ENCODE measurements at regions of chr15 and their contacts with region 1.

Region 1: DNA sequence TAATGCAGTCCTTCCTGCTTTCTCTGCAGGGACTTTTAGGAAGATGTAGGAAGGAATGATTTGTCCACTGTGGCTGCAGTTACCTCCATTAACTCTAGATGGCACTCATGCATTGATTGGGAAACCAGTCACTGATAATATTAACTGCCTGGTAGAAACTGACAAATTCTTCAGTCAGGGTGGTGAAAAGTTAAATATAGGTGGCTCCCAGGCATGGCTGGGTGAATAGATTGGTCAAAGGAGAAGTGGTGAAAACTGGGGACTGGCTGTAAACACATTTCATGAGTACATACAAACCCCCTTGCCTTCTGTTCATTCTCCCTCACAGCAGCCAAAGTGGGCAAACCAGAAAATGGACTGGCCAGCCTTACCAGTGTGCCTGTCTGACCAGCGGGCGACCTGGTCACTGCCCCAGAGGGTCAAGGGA is 333.4 kb downstream of the THSD4 start:
- DNase-seq: peak; percentile 73
- H3K4me3 ChIP-seq: no peak overlapping the region
- H3K27ac ChIP-seq: peak overlapping the region; percentile 99
- H3K4me1 ChIP-seq: peaks cover 49% of the 10 kb centered on the region
- H3K27me3 ChIP-seq: no peaks in the 10 kb centered on the region
- CTCF ChIP-seq: peak; percentile 93 to 98

Region 2: DNA sequence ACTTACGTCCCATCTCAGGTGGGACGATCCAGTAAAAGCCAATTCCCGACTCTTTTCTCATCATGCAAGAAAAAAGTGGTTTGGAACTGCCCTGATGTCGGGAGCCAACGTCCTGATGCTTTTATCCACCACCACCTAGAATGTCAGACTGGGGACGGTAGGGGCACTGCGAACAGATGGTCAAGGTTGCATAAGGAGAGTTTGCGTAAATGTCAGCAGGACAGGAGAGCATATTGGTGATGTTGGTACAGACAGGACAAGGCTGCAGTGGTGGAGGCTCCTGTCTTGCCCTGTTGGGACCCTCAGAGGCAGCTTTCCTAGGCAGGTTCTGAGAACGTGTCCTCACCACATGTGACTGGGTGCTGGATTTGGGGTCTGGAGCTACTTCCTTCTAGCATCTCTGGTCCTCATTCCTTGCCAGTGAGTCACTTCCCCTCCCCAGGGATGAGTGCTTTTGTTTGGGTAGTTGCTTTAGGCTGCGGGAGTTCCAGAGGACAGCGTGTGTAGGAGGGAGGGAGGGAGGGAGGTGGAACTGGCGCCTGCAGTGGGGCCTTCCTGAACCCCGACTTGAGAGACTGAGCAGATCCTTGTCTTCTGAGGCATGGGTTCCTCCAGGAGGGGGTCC is 312.4 kb before region 1 on chr15:
- CTCF ChIA-PET with region 1: interaction called, 4 read pairs
- dilution Hi-C with region 1: loop called (anchors 25 kb)
- in situ Hi-C with region 1: no loop called
- intact Hi-C with region 1: no loop called
- DNase-seq: peak; percentile 85
- H3K4me3 ChIP-seq: no peak overlapping the region
- H3K27ac ChIP-seq: peak overlapping the region; percentile 87
- H3K4me1 ChIP-seq: peaks cover 54% of the 10 kb centered on the region
- H3K27me3 ChIP-seq: no peaks in the 10 kb centered on the region
- CTCF ChIP-seq: no peak

Region 3: DNA sequence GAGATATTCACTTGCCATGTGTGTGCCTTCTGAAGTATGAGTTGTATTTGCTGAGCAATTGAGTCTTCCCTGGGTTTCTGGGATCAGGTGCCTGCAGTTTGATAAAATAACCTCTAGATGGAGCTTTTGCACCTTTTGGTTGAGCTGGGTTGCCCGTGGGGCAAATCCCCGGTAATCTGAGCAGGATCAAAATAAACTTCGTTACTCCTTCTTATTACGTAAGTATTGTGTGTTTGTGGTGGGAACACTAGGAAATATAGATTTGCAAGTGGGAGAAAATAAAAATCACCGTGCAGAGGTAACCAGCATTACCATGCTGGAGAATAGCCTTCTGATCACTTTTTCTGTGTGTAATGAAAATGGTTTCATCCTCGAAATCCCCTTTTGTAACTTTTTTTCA is 84.3 kb after region 1 on chr15:
- CTCF ChIA-PET with region 1: interaction called, 3 read pairs
- dilution Hi-C with region 1: no loop called
- in situ Hi-C with region 1: no loop called
- intact Hi-C with region 1: loop called (anchors 1 kb)
- DNase-seq: peak; percentile 63
- H3K4me3 ChIP-seq: no peak overlapping the region
- H3K27ac ChIP-seq: no peak overlapping the region
- H3K4me1 ChIP-seq: peaks cover 8% of the 10 kb centered on the region
- H3K27me3 ChIP-seq: no peaks in the 10 kb centered on the region
- CTCF ChIP-seq: peak; percentile 74 to 81

Region 4: GRCh38 chr15:71575474-71576045 is 126.9 kb after region 1 on chr15:
- CTCF ChIA-PET with region 1: interaction called, 5 read pairs
- dilution Hi-C with region 1: no loop called
- in situ Hi-C with region 1: no loop called
- intact Hi-C with region 1: loop called (anchors 5 kb)
- DNase-seq: no peak
- H3K4me3 ChIP-seq: no peak overlapping the region
- H3K27ac ChIP-seq: no peak overlapping the region
- H3K4me1 ChIP-seq: peaks cover 18% of the 10 kb centered on the region
- H3K27me3 ChIP-seq: no peaks in the 10 kb centered on the region
- CTCF ChIP-seq: peak; percentile 59 to 66

Region 5: DNA sequence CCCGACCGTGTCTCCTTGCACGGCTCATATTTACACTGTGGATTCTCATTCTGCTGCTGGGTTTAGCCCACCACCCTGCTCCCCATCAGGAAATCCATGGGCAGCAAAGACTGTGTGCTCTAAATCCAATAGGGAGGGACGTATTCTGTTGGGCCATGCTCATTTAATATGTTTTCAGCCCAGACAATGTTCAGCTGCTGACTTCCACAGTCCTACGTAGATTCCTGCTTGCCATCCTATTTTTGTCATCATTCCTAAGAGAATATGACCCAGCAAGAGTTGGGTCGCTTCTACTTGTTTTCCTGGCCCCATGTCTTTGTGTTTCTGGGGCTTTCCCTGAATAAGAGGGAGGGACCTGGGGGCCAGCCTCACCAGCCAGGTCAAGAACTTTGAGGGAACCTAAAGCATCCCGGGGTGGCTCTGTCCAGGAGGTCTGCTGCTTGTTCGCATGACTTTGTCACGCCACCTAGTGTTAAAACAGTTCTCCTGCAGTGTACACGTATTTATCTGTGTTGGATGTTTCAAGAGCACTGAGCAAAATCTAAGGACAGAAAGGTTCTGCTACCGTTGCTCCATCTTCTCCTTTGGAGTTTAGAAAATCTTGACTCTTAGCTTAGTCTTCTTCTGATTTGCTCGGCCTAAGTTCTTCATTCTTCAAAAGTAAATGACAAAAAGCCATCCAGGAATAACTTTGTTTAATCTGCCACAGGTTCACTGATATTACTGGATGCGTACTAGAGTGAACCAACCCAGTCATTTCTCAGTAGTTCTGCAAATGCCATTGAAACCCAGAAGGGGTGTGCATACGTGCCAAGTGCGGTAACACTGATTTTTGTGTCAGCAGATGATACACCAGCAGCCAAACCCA is 281.8 kb after region 1 on chr15:
- CTCF ChIA-PET with region 1: no interaction called
- dilution Hi-C with region 1: no loop called
- in situ Hi-C with region 1: no loop called
- intact Hi-C with region 1: loop called (anchors 1 kb)
- DNase-seq: peak; percentile 45
- H3K4me3 ChIP-seq: no peak overlapping the region
- H3K27ac ChIP-seq: no peak overlapping the region
- H3K4me1 ChIP-seq: no peaks in the 10 kb centered on the region
- H3K27me3 ChIP-seq: no peaks in the 10 kb centered on the region
- CTCF ChIP-seq: peak; percentile 75 to 81